GM13976 (cell line): ENCODE measurements at regions of chr3 and their contacts with region 1.

Region 1: DNA sequence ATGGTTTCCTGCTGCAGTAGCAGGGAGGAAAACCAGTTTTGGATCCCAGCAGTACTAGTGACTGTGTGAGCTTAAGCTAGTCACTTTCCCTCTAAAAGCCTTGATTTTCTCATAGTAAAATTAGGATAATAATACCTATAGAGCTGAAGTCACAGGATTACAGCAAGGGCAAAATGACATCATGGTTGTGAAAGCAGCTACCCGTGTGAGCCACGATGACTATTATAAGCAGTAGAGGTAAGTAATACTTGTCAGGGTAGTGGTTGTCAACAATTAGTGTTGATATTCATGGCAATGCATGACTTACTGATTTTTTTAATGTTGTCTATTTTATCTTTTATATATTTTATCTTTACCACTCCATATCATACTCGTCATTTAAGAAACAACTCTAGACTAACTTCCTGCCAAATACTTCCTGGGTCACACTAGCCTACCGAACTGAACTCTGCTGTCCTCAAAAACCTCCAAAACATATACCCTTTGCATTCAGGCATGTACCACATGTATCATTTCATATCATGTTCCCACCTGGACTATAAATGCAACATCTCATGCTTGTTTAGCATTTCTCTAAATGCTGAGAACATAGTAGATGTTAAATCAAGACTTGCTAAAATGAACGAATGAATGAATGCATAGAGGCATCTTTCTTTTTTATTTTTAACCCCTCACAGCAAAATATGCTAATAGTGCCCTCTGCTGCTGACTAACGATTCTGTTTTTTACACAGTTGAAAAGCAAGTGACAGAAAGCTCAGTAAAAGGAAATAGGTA is 172.6 kb downstream of the P3H2 start:
- DNase-seq: peak; percentile 26
- CTCF ChIP-seq: peak; percentile 48

Region 2: DNA sequence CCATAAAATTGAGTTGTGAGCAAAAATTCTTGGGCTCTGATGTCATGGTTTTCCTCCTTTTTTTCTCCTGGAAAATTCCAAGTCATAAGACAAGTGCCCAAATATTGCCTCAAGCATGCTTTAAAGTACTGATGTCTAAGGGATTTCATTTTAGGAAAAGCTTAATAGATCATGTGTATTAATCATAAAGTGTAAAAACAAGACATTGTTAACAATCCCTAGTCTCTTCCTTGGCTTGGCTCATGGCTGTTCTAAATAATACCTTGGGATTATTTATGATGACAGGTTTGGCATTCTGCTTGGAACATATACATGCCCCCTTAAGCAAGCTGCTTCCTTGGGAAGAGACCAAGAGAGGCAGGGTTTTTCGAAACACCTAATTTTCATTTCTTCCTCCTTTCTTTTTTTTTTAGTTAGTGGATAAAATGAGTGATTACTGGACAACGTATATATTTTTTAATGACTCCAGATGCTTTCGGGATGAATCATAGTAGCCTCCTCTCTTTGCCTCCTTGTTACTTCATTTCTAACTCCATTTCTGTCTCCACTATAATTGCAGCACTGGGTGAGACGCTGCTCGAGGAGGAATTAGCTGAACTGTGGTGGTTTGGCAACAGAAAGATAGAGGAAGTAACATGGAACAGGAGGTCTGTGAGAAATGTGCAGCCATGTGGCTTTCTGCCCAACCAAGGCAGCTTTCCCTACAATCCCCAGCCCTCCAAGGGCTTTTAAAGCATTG is 671.5 kb before region 1 on chr3:
- in situ Hi-C with region 1: loop called (anchors 5 kb)
- DNase-seq: no peak
- CTCF ChIP-seq: no peak

Region 3: DNA sequence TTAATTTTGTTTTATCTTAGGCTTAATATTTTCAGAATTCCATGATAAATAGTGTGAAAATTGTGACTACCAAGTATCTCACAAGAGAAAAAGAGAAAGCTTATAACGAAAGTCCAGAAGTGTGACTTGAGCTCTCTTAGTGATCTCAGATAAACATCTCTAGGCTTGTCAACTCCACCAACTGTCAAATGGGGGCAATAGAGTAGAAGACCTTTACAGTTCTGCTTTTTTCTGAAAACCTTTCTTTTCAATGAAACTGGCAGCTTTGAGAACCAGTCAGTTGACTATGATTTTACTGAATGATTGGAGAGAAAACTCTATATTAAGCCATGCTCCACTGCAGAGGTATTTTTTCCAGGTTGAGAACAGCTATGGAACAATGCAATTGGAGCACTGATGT is 436.1 kb before region 1 on chr3:
- in situ Hi-C with region 1: loop called (anchors 25 kb)
- DNase-seq: peak; percentile 15
- CTCF ChIP-seq: peak; percentile 52